K562 (cell line): ENCODE measurements at regions of chr9 and their contacts with region 1.

Region 1: DNA sequence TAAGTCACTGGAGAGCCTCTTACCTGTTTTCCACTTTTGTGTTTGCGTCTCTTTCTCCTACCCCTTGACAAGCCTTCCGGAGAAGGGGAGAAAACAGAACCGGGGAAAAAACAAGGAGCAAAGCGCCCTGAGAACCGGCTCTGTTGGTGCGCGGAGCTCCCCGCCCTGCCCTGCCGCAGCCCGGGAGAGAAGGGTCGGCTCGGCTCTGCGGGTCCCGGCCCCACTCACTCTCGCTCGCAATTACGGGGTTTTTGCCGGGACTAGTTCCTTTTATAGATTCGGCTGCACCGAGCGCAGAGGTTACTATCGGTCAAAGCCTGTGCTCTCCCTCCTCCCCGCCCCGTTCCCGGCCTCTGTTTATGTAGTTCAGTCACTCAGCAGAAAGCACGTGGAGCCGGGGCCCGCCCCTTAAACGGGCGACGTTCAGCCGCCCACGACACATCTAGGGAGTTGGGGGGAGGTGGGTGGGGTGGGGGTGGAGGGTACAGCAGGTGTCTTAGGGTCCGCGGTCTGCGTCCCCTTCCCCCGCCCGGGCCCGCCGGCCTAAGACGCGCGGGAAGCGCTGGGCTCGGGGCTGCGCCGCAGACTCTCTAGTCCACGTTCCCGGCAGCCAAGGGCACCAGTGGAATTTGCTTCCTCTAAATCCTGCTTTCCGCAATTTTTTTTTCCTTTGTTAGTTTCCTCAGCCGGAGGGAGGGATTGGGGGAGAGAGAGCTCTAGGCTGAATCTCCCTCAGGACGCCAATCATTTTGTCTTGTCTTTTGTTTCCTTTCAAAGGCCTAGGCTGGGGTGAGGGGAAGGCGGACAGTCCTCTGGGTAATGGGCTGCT is at the start of gene ABCA1:
- DNase-seq: peak; percentile 32 to 48 (median 35)
- ATAC-seq: peak; percentile 69
- H3K4me3 ChIP-seq: no peak within 1 kb of the TSS
- H3K27ac ChIP-seq: no peak within 1 kb of the TSS
- H3K4me1 ChIP-seq: peaks cover 0 to 16% of the 10 kb centered on the region in 2 experiments; a peak in 2 of 5 replicates
- H3K27me3 ChIP-seq: peaks cover 3 to 32% of the 10 kb centered on the region in 2 experiments; a peak in 3 of 5 replicates
- CTCF ChIP-seq: no peak
- EP300 ChIP-seq: no peak
- POLR2A ChIP-seq: no peak
- RAD21 ChIP-seq: no peak
- polyA plus RNA-seq, gene ABCA1: under 0.01 to 0.01 TPM

Region 2: DNA sequence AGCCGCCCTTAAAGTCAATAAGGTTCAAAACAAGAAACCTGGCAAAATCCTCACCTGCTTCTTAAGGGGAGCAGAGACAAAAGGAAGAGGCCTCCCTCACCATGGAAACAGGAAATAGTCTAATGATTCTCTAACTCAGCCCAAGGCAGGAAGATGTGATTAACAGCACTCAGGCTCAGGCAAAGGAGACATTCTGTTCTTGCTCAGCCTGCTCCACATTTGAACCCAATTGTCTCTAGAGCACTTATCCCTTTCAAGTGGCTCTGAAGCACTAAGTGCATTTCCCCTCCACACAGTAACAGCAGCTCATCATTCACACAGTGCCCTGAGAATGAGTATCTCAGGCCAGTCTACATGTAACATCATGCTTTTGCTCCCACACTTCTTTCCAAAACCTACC is 91.9 kb before region 1 on chr9:
- CTCF ChIA-PET with region 1: no interaction called
- POLR2A ChIA-PET with region 1: no interaction called
- in situ Hi-C with region 1: no loop called
- intact Hi-C with region 1: no loop called
- DNase-seq: no peak
- ATAC-seq: no peak
- H3K4me3 ChIP-seq: no peak overlapping the region
- H3K27ac ChIP-seq: no peak overlapping the region
- H3K4me1 ChIP-seq: no peaks in the 10 kb centered on the region
- H3K27me3 ChIP-seq: peaks cover 4 to 31% of the 10 kb centered on the region in 2 experiments; a peak in 4 of 5 replicates
- CTCF ChIP-seq: no peak
- EP300 ChIP-seq: no peak
- POLR2A ChIP-seq: no peak
- RAD21 ChIP-seq: no peak

Region 3: DNA sequence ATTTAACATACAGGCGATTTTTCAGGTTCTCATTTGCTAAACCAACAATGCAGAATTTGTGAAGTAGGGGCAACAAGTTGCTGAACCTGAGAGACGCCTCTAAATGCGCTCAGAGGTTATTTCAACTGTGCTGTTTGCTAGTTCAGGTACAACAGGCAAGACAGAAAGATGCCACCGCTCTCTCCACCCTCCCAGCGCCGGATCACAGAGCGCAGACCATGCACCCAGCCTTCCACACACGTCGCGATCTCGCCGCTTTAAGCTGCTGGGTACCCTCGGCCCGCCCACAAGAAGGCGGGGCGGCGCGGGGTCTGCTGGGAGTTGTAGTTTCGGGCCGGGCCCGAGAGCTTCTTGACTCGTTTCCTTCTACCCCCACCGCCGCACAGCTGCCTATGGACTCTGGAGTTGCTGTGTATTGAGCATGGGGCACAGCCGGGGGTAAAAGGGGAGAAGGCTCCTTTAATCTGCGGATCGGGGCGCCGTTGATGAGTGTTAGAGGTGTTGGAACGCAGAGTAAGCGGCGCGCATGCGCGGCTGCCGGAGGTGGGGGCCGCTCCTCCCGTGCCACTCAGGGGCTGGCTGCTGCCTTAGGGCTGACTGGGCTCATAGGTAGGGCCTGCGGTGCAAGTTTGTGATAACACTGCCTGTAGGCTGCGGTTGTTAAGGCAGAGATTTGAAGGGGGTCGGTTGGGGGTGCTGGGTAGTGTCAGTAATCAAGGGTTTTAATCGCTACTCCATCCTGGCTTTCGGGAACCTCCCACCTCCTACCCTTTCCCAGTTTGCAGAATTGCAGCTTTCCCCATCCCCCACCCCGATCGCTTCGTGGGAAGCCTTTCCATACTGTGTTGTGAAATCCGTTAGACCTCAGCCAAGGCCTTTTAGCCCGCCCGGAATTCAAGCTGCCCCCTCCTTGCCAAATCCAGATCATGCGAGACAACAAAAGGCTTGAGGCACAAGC is 40.2 kb after region 1 on chr9:
- CTCF ChIA-PET with region 1: no interaction called
- POLR2A ChIA-PET with region 1: no interaction called
- in situ Hi-C with region 1: no loop called
- intact Hi-C with region 1: loop called (anchors 1 kb)
- DNase-seq: peak; percentile 83 to 88 (median 84)
- ATAC-seq: peak; percentile 100
- H3K4me3 ChIP-seq: peak overlapping the region; percentile 68
- H3K27ac ChIP-seq: peak overlapping the region; percentile 69; the same call in 2 of the 3 replicates
- H3K4me1 ChIP-seq: peaks cover 0 to 9% of the 10 kb centered on the region in 2 experiments; a peak in 3 of 5 replicates
- H3K27me3 ChIP-seq: peaks cover 0 to 14% of the 10 kb centered on the region in 2 experiments; a peak in 2 of 5 replicates
- CTCF ChIP-seq: no peak
- EP300 ChIP-seq: no peak
- POLR2A ChIP-seq: no peak
- RAD21 ChIP-seq: no peak